Activated T-helper 1 cell treated with anti-CD3 and anti-CD28 coated beads, Interleukin-12 subunit alpha, Interleukin-12 subunit beta, Interleukin-2, Interleukin-4 antibody, amounts not matched to agents 30 ng/mL and 10 ng/mL and 1 ng/mL, durations not matched to agents 14 hours and 24 hours and 36 hours (primary cell): ENCODE measurements at regions of chr12 and their contacts with region 1.

Region 1: GRCh38 chr12:57836442-57837375 is 9.8 kb downstream of the CTDSP2 start:
- DNase-seq: peak; percentile 33
- H3K4me3 Mint-ChIP-seq: peak overlapping the region; percentile 47
- H3K27ac Mint-ChIP-seq: peak overlapping the region; percentile 87
- H3K4me1 Mint-ChIP-seq: peaks cover 84% of the 10 kb centered on the region
- H3K27me3 Mint-ChIP-seq: no peaks in the 10 kb centered on the region

Region 2: DNA sequence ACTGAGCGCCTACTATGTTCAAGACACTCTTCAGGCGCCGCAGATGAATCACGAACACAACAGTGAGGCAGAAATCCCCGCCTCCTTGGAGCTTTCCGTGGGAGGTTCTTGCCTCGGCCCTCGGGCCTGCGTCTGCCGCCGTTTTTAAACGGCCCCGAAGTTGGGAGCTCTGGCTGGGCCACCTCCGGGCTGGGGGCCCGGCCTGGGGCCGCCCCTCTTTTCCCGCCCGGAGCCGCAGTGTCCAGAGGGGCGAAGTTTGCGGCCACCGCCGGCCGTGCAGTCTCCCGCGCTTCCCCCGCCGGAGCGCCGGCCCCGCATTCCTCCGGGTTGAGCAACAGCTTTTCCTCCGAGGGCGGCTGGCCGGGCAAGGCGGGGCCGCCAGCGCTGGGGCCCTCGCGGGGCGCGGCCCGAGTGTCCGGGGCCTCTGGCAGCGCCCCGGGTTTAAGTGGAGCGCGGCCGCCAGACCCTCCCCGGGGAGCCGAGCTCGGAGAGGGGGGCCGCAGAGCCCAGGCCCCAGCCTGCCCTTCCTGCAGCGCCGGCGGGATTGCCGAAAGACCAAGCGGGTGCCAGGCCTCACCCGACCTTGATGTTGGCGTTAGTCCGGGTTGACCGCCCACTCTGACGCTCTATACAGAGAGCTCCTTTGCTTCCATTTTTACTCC is 28.5 kb after region 1 on chr12:
- intact Hi-C with region 1: loop called (anchors 1 kb)
- DNase-seq: peak; percentile 44
- H3K4me3 Mint-ChIP-seq: peak overlapping the region; percentile 86
- H3K27ac Mint-ChIP-seq: peak overlapping the region; percentile 83
- H3K4me1 Mint-ChIP-seq: peaks cover 11% of the 10 kb centered on the region
- H3K27me3 Mint-ChIP-seq: peaks cover 10% of the 10 kb centered on the region